Activated naive CD4-positive, alpha-beta T cell treated with anti-CD3 and anti-CD28 coated beads, Interleukin-2, amount 10 ng/mL, durations not matched to agents 7 days and 5 days (primary cell): ENCODE measurements at regions of chr1 and their contacts with region 1.

Region 1: GRCh38 chr1:233440951-233441401 is 113.5 kb downstream of the MAP3K21 start:
- DNase-seq: no peak
- H3K4me3 Mint-ChIP-seq: no peak overlapping the region
- H3K27ac Mint-ChIP-seq: no peak overlapping the region
- H3K4me1 Mint-ChIP-seq: no peaks in the 10 kb centered on the region
- H3K27me3 Mint-ChIP-seq: peaks cover 9% of the 10 kb centered on the region

Region 2: GRCh38 chr1:233463333-233463732 is 22.4 kb after region 1 on chr1:
- CTCF ChIA-PET with region 1: no interaction called
- DNase-seq: no peak
- H3K4me3 Mint-ChIP-seq: no peak overlapping the region
- H3K27ac Mint-ChIP-seq: no peak overlapping the region
- H3K4me1 Mint-ChIP-seq: no peaks in the 10 kb centered on the region
- H3K27me3 Mint-ChIP-seq: no peaks in the 10 kb centered on the region

Region 3: DNA sequence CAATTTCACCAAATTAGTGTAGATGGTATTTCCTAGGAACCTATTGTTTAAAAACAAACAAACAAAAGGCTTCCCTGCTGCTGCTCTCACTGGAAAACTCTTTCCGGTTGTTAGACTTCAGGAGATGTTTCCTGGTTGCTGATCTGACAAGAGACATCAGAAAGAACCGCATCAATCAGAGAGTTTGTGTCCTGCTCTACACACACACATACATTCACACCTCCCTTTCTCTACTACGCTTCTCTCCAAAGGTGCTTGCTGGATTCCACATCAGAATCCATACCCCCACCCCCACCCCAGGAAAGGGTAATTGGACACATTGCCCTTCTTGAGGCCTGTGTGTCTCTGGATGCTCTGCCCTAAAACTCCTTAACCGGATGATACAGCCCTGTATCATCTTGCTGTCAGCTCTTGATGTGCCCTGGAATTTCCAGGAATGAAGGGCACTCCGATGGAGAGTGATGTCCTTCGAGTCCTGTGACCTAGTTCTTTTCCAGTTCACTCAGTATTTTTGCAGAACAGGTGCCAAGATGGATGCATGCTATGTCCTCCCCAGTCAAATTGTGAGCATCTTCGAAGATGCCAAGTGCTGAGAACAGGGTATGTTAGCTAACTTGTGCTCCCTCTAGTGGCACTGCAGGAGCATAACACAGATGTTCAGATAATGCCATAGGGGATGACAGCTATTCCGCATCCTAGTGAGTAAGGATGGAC is 349.8 kb after region 1 on chr1:
- CTCF ChIA-PET with region 1: interaction called, 21 read pairs
- DNase-seq: peak; percentile 31
- H3K4me3 Mint-ChIP-seq: no peak overlapping the region
- H3K27ac Mint-ChIP-seq: no peak overlapping the region
- H3K4me1 Mint-ChIP-seq: no peaks in the 10 kb centered on the region
- H3K27me3 Mint-ChIP-seq: peaks cover 8% of the 10 kb centered on the region

Region 4: DNA sequence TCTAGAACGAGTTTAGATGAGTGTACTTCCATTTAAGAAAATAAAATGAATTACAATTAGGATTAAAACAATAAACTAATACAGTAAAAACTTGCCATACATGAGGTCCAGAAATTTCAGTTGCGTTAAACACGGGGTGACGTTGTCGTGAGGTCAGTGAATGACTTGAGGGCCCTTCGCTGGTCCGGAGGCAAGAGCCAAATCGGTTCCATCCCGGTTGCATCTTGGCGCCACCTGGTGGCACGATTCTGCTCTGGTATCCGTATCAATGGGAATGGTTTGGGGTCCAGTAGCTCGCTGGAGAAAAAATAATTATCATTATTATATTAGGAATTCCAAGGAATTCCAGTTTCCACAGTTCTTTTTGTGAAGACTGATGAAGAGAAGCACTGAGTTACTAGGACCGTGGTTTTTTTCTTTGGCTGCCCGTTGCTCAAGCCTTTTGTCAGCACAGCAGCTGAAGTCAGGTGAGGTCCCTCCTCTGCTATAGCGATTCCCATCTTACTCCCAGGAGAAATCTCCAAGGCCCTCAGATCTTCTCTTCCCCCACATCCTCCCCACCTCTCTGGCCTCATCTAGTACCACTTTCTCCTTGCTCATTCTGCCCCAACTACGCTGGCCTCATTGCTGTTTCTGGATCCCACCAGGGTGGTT is 624.9 kb after region 1 on chr1:
- CTCF ChIA-PET with region 1: interaction called, 31 read pairs
- DNase-seq: peak; percentile 72
- H3K4me3 Mint-ChIP-seq: no peak overlapping the region
- H3K27ac Mint-ChIP-seq: no peak overlapping the region
- H3K4me1 Mint-ChIP-seq: no peaks in the 10 kb centered on the region
- H3K27me3 Mint-ChIP-seq: peaks cover 14% of the 10 kb centered on the region